BJ (cell line): ENCODE measurements at regions of chr11 and their contacts with region 1.

Region 1: DNA sequence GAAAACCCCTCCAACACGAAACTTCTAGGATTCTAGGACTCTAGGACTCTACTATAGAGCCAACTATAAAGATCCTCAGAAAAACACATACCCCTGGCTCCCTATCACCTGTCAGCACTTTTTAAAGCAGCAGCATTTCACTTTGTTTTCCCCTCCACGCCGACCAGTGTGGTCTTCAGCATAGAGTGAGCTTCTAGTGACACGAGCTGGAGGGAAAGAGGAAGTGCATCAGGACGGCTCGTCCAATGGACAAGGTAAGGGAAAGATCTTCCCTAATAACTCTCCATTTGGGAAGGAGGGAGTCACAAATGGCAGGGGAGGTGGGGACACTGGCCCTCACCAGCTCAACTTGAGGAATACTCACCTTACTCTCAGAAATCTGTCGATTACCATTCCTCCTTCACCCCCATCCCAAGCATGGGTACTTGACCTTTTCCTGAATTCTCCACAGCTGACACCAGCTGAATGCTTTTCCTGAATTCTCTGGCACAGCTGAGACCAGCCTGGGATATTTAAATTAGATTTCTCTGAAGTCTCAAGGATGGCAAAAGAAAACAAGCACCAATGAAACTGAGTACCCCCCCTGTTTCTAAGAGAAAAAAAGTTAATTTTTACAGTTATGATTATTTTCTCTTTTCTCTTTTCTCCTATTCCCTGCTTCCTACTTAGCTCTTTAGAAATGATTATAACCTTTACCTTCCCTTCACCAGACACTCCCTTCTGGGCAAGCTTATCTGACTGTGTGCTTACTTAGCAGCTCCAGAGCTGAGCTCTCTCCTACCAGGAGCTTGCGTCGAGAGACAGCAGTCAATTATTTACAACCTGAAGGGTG is 33.3 kb upstream of the NNMT start:
- DNase-seq: no peak
- H3K4me3 ChIP-seq: no peak overlapping the region
- H3K27me3 ChIP-seq: peaks cover 9% of the 10 kb centered on the region
- CTCF ChIP-seq: peak; percentile 84

Region 2: GRCh38 chr11:113884361-113884836 is 378.5 kb before region 1 on chr11:
- CTCF ChIA-PET with region 1: interaction called, 33 read pairs
- POLR2A ChIA-PET with region 1: no interaction called
- DNase-seq: no peak
- H3K4me3 ChIP-seq: no peak overlapping the region
- H3K27me3 ChIP-seq: no peaks in the 10 kb centered on the region
- CTCF ChIP-seq: no peak

Region 3: GRCh38 chr11:113994077-113994954 is 268.6 kb before region 1 on chr11:
- CTCF ChIA-PET with region 1: interaction called, 218 read pairs
- POLR2A ChIA-PET with region 1: interaction called, 3 read pairs
- DNase-seq: no peak
- H3K4me3 ChIP-seq: no peak overlapping the region
- H3K27me3 ChIP-seq: 0 out of 2 replicates have a peak, but pooled peaks cover 1% of the 10 kb centered on the region
- CTCF ChIP-seq: peak; percentile 71

Region 4: DNA sequence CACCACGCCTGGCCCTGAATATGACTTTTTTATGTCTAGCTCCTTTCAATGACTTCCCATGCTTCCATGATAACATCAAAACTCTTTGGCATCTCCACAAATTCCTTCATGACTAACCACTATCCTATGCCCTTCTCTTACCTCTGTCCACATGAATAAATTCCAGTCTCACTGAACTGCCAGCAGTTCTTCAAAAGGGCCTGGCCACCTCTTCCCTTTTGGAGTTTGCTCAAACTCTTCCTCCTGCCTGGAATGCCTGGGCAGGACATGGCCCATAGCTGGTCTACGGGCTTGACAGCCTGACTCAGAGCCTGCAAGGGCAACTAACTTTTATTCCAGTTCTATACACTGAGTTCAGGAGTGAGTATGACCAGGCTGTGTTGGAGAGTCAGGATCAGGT is 245.2 kb before region 1 on chr11:
- CTCF ChIA-PET with region 1: interaction called, 88 read pairs
- POLR2A ChIA-PET with region 1: no interaction called
- DNase-seq: no peak
- H3K4me3 ChIP-seq: no peak overlapping the region
- H3K27me3 ChIP-seq: no peaks in the 10 kb centered on the region
- CTCF ChIP-seq: no peak

Region 5: GRCh38 chr11:114036156-114036811 is 226.6 kb before region 1 on chr11:
- CTCF ChIA-PET with region 1: interaction called, 206 read pairs
- POLR2A ChIA-PET with region 1: no interaction called
- DNase-seq: no peak
- H3K4me3 ChIP-seq: peak overlapping the region; percentile 24
- H3K27me3 ChIP-seq: peaks cover 6% of the 10 kb centered on the region
- CTCF ChIP-seq: peak; percentile 83

Region 6: DNA sequence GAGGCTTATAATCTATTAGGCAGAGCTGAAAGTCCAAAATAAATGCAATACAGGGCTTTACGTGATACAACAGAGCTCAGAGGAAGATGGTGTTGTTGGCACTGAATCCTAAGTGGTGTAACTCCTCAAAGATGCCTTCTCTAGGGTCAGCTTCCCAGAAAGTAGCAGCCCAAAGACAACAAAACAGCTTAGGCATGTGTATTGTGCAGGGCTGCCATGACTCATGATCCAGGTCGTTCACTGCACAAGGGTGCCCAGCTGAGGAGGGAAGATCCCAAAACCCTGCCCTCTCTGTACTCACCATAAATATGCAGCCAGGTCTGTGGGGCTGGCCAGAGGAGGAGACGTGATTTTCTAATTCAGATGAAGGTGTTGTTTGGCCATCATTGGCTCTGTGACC is 26.1 kb before region 1 on chr11:
- CTCF ChIA-PET with region 1: interaction called, 10 read pairs
- POLR2A ChIA-PET with region 1: no interaction called
- DNase-seq: no peak
- H3K4me3 ChIP-seq: no peak overlapping the region
- H3K27me3 ChIP-seq: peaks cover 6% of the 10 kb centered on the region
- CTCF ChIP-seq: no peak

Region 7: DNA sequence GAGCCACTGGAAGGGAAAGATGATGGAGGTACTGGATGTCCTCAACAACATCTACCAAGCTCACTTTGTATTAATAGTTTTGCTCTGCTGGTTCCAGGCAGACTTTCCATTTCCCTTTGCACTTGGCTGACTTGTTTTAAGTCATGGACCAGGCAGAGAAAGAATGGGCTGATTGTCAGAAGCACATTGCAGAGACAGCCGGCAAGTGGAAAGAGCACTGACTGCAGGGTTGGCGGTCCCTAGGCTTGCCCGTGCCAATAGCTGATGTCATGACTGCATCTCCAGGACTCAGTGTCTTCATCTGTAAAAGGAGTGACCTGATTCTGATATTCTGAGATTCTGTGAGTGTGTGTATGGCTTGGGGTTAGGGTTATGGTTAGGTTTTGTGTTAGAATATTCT is 12.4 kb after region 1 on chr11:
- CTCF ChIA-PET with region 1: interaction called, 32 read pairs
- POLR2A ChIA-PET with region 1: no interaction called
- DNase-seq: no peak
- H3K4me3 ChIP-seq: no peak overlapping the region
- H3K27me3 ChIP-seq: peaks cover 20% of the 10 kb centered on the region
- CTCF ChIP-seq: no peak